ENCODE measurements at regions of chr7 and their contacts with region 1.

Region 1: GRCh38 chr7:120741371-120742042 is 116.4 kb downstream of the TSPAN12 start:
- DNase-seq: no peak
- ATAC-seq: no peak
- H3K4me3 ChIP-seq: no peak overlapping the region
- H3K27ac ChIP-seq: no peak overlapping the region
- H3K4me1 ChIP-seq: no peaks in the 10 kb centered on the region
- H3K27me3 ChIP-seq: no peaks in the 10 kb centered on the region
- CTCF ChIP-seq: no peak

Region 2: GRCh38 chr7:121530227-121531174 is 789.0 kb after region 1 on chr7:
- CTCF ChIA-PET with region 1: interaction called, 12 read pairs
- POLR2A ChIA-PET with region 1: no interaction called
- in situ Hi-C with region 1: no loop called
- intact Hi-C with region 1: no loop called
- DNase-seq: peak; percentile 100
- ATAC-seq: peak; percentile 100
- H3K4me3 ChIP-seq: peak overlapping the region; percentile 10 to 30; a peak in 2 of 4 replicates
- H3K27ac ChIP-seq: peak overlapping the region; percentile 86
- H3K4me1 ChIP-seq: peaks cover 22% of the 10 kb centered on the region
- H3K27me3 ChIP-seq: no peaks in the 10 kb centered on the region
- CTCF ChIP-seq: no peak

Measured in Panc1 (cell line).